Panc1 (cell line): ENCODE measurements at regions of chr5 and their contacts with region 1.

Region 1: DNA sequence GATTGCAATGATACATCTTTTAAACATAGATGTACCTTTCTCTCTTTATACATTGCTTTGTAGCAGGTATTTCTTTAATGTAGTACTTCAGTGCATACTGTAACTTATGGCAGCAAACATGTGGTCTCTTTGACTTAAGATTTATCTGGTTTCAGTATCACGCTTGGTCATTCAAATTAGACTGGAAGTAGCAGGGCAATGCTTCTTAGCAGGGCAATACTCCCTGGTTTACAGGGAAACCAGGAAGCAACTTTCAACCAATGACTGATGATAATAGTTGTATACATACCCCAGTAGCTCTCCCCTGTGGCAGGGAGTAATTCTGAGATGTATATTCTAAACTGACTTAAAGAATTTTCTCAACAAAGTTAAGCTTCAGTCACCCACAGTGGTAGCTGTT is 761.1 kb upstream of the CDH10 start:
- DNase-seq: no peak
- ATAC-seq: no peak
- H3K4me3 ChIP-seq: no peak overlapping the region
- H3K27ac ChIP-seq: no peak overlapping the region
- H3K4me1 ChIP-seq: no peaks in the 10 kb centered on the region
- H3K27me3 ChIP-seq: no peaks in the 10 kb centered on the region
- CTCF ChIP-seq: no peak

Region 2: GRCh38 chr5:25453500-25453899 is 47.6 kb after region 1 on chr5:
- CTCF ChIA-PET with region 1: no interaction called
- POLR2A ChIA-PET with region 1: no interaction called
- in situ Hi-C with region 1: no loop called
- intact Hi-C with region 1: loop called (anchors 2 kb)
- DNase-seq: no peak
- ATAC-seq: no peak
- H3K4me3 ChIP-seq: no peak overlapping the region
- H3K27ac ChIP-seq: no peak overlapping the region
- H3K4me1 ChIP-seq: no peaks in the 10 kb centered on the region
- H3K27me3 ChIP-seq: no peaks in the 10 kb centered on the region
- CTCF ChIP-seq: no peak

Region 3: DNA sequence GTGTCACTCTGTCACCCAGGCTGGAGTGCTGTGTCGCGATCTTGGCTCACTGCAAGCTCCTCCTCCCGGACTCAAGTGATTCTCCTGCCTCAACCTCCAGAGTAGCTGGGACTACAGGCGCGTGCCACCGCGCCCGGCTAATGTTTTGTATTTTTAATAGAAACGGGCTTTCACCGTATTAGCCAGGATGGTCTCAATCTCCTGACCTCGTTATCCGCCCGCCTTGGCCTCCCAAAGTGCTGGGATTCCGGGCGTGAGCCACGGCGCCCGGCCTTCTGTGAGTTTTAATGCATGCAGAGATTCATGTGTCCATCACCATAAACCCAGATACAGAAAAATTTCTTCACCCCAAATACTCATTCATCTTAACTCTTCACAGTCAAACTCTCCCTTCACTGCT is 585.8 kb after region 1 on chr5:
- CTCF ChIA-PET with region 1: no interaction called
- POLR2A ChIA-PET with region 1: no interaction called
- in situ Hi-C with region 1: no loop called
- intact Hi-C with region 1: no loop called
- DNase-seq: no peak
- ATAC-seq: no peak
- H3K4me3 ChIP-seq: no peak overlapping the region
- H3K27ac ChIP-seq: no peak overlapping the region
- H3K4me1 ChIP-seq: no peaks in the 10 kb centered on the region
- H3K27me3 ChIP-seq: no peaks in the 10 kb centered on the region
- CTCF ChIP-seq: no peak